ENCODE measurements at regions of chr1 and their contacts with region 1.

Region 1: DNA sequence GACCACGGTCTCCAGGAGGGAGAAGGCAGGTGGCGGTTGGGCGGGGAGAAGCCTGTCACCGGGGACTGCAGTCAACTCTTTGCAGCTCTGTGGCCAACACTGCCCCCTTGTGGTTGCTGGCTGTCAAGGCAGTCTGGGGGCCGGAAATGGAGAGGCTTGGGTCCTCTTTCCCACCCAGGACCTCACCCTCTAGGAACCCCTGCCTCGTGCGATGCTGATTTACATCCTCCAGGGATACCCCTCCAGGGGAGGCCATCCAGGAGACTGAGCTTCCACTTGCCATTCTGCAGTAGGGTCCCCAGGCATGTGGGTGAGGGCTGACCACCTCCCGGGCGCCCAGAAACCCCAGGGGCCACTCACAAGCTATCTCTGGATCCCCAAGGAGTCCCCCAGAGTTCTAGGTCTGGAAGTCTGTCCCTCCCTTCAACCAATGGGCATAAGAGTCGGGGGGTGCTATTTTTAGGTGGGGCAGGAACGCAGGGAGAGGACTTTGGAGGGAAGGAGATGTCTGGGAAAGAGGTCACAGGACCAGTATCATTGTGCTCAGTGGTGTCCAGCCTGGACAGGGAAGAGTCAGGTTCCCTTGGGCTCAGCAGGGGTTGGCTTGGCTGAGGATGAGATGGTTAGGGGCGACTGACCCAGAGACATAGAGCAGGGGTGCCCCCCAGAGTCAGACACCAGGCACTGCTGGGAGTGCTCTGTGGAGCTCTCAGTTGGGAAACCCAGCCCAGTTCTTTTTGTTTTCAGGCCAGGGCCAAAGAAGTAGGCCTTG is 7.1 kb upstream of the GPR61 start:
- DNase-seq: peak; percentile 86
- H3K4me3 ChIP-seq: peak overlapping the region in 1 of 2 experiments; percentile 44; a peak in 1 of 4 replicates
- H3K27ac ChIP-seq: peak overlapping the region in 1 of 2 experiments; percentile 70; a peak in 1 of 4 replicates
- H3K4me1 ChIP-seq: peaks cover 0 to 48% of the 10 kb centered on the region in 2 experiments; a peak in 1 of 4 replicates
- H3K27me3 ChIP-seq: no peaks in the 10 kb centered on the region
- CTCF ChIP-seq: peak; percentile 84
- EP300 ChIP-seq: no peak
- RAD21 ChIP-seq: peak; percentile 93

Region 2: DNA sequence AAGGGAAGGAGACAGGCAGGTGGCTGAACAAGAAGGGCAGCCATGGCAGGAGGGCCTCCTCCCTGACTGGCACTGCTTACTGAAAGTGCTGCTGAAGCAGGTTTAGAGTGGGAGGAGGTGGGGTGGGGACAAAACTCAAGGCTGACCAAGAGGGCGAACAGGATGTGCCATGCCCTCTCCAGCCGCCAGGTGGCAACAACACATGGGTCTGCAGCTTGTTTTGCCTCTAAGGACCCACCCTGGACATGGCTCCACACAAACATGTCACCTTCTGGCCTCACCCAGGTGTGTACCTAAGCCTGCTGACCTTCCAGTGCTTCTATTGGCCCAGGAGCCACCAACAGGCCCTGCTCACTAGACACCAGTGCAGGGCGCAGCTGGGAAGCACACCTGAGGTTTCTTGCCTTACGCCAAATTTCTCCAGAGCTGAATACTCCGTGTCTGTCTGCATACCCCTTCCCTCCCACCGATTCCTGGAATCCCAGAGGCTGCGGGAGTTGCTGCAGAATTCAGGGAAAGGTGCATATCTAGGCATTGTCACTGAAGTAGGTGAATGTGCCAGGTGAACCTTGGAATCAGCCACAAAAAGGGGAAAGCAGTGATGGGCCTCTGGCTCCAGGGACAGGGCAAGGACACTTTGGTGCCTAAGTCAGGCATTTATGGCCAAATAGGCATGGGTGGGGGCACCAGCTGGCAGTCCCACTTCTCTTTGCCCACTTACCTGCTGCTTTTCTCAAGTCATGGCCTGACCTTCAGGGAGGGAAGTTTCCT is 254.9 kb before region 1 on chr1:
- CTCF ChIA-PET with region 1: interaction called, 37 read pairs
- POLR2A ChIA-PET with region 1: interaction called, 3 read pairs
- DNase-seq: peak; percentile 88
- H3K4me3 ChIP-seq: no peak overlapping the region; a peak in 1 of 4 replicates
- H3K27ac ChIP-seq: peak overlapping the region in 1 of 2 experiments; percentile 44; a peak in 2 of 4 replicates
- H3K4me1 ChIP-seq: peaks cover 15 to 38% of the 10 kb centered on the region in 2 experiments
- H3K27me3 ChIP-seq: no peaks in the 10 kb centered on the region
- CTCF ChIP-seq: peak; percentile 90
- EP300 ChIP-seq: no peak
- RAD21 ChIP-seq: peak; percentile 77

Region 3: DNA sequence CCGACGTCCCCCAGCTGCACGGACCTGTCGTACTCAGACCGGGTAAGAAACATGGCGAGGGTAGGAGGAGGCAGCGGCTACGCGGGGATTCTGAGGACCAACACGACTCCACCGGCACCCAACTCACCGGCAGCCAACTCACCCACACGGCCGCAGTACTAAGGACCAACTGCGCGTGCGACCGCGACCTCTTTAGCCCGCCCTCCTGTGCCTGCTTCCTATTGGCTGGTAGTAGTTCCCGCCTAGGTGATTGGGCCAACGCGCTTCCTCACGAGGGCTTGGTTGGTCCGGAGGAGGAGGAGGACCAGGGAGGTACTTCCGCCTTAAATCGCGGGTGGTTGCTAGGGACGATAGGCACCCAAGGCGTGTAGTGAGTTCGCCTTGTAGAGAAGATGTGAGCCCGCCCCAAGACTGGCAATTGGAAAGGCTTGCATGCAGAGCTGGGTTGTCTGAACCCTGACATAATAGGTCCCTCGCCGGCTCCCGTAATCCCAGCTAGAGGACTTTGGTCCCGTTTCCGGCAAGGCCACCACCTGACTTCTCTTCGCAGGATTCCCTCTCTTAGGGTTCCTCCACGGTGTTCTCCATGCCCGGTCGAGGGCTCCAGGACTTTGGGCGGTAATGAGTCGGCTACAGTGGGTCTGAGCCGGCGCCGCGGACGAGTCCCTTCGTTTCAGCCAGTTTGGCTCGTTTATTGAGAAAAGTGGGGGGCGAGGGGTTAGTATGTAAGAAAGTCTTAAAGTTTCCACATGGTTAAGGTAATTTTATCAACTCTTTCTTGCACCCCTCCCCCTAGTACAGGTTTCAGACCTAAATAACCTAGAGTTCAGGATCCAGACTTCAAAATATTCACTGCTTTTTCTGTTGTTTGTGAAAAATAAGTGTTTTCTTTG is 106.0 kb before region 1 on chr1 and contains the start of gene PSMA5:
- CTCF ChIA-PET with region 1: interaction called, 22 read pairs
- POLR2A ChIA-PET with region 1: no interaction called
- DNase-seq: peak; percentile 95
- H3K4me3 ChIP-seq: peak within 1 kb of the TSS; percentile 83 to 92
- H3K27ac ChIP-seq: peak within 1 kb of the TSS; percentile 90 to 93
- H3K4me1 ChIP-seq: peaks cover 4 to 13% of the 10 kb centered on the region in 2 experiments; a peak in 3 of 4 replicates
- H3K27me3 ChIP-seq: no peaks in the 10 kb centered on the region
- CTCF ChIP-seq: no peak
- EP300 ChIP-seq: no peak
- RAD21 ChIP-seq: no peak
- polyA plus RNA-seq, gene PSMA5: 118 and 139 TPM in 2 replicates

Region 4: DNA sequence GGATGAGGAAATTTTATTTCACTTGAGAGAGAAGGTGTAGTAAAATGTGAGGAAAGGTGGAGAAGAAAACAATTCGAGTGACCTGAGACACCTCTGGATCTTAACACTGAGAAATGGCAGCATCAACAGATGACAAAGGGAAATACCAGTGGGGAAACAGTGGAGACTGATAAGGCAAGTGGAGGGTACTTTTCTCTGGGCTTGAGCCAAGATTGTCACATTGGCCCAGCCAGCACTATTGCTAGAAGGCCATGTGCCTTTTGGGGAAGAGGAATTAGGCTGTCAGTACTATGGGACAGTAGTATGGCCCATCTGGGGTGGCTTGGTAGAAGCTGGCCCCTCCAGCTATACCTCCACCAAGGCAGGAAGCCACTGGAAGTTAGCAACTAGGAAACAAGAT is 57.9 kb before region 1 on chr1:
- CTCF ChIA-PET with region 1: interaction called, 12 read pairs
- POLR2A ChIA-PET with region 1: no interaction called
- DNase-seq: no peak
- H3K4me3 ChIP-seq: no peak overlapping the region
- H3K27ac ChIP-seq: no peak overlapping the region
- H3K4me1 ChIP-seq: no peaks in the 10 kb centered on the region; a peak in 1 of 4 replicates
- H3K27me3 ChIP-seq: peaks cover 93% of the 10 kb centered on the region
- CTCF ChIP-seq: no peak
- EP300 ChIP-seq: no peak
- RAD21 ChIP-seq: no peak

Region 5: GRCh38 chr1:109499661-109500536 is 32.7 kb before region 1 on chr1:
- CTCF ChIA-PET with region 1: interaction called, 1,710 read pairs
- POLR2A ChIA-PET with region 1: interaction called, 13 read pairs
- DNase-seq: peak; percentile 42
- H3K4me3 ChIP-seq: no peak overlapping the region
- H3K27ac ChIP-seq: no peak overlapping the region; a peak in 1 of 4 replicates
- H3K4me1 ChIP-seq: peaks cover 0 to 17% of the 10 kb centered on the region in 2 experiments; a peak in 1 of 4 replicates
- H3K27me3 ChIP-seq: no peaks in the 10 kb centered on the region
- CTCF ChIP-seq: peak; percentile 55
- EP300 ChIP-seq: no peak
- RAD21 ChIP-seq: peak; percentile 24; the same call in 1 of the 2 replicates

Region 6: GRCh38 chr1:109548321-109549267 is 16.0 kb after region 1 on chr1 and contains the start of gene GNAI3:
- CTCF ChIA-PET with region 1: interaction called, 107 read pairs
- POLR2A ChIA-PET with region 1: interaction called, 7 read pairs
- DNase-seq: peak; percentile 90
- H3K4me3 ChIP-seq: peak within 1 kb of the TSS; percentile 80 to 88
- H3K27ac ChIP-seq: peak within 1 kb of the TSS; percentile 88 to 93
- H3K4me1 ChIP-seq: peaks cover 3 to 20% of the 10 kb centered on the region in 2 experiments; a peak in 3 of 4 replicates
- H3K27me3 ChIP-seq: no peaks in the 10 kb centered on the region
- CTCF ChIP-seq: no peak
- EP300 ChIP-seq: peak in 1 of 2 experiments; percentile 33; a peak in 1 of 4 replicates
- RAD21 ChIP-seq: no peak; the same call in 1 of the 2 replicates
- polyA plus RNA-seq, gene GNAI3: 4.0 and 4.8 TPM in 2 replicates

Region 7: GRCh38 chr1:109655601-109656519 is 123.3 kb after region 1 on chr1 and contains the start of gene GSTM4:
- CTCF ChIA-PET with region 1: interaction called, 297 read pairs
- POLR2A ChIA-PET with region 1: no interaction called
- DNase-seq: peak; percentile 89
- H3K4me3 ChIP-seq: peak within 1 kb of the TSS; percentile 69 to 72
- H3K27ac ChIP-seq: peak within 1 kb of the TSS; percentile 41 to 83; a peak in 3 of 4 replicates
- H3K4me1 ChIP-seq: peaks cover 12% of the 10 kb centered on the region in 2 experiments; a peak in 3 of 4 replicates
- H3K27me3 ChIP-seq: no peaks in the 10 kb centered on the region
- CTCF ChIP-seq: peak; percentile 20; the same call in 1 of the 2 replicates
- EP300 ChIP-seq: no peak
- RAD21 ChIP-seq: no peak
- polyA plus RNA-seq, gene GSTM4: 34.2 and 36.1 TPM in 2 replicates